ENCODE measurements at regions of chr11 and their contacts with region 1.

Region 1: GRCh38 chr11:7513234-7514098 is at the start of gene PPFIBP2:
- DNase-seq: peak; percentile 79
- H3K4me3 Mint-ChIP-seq: peak within 1 kb of the TSS; percentile 88
- H3K27ac Mint-ChIP-seq: peak within 1 kb of the TSS; percentile 78
- H3K4me1 Mint-ChIP-seq: peaks cover 10% of the 10 kb centered on the region
- H3K27me3 Mint-ChIP-seq: peaks cover 31% of the 10 kb centered on the region
- total RNA-seq, gene PPFIBP2: 1.1 and 2.1 TPM in 2 replicates

Region 2: GRCh38 chr11:7571640-7572000 is 58.2 kb after region 1 on chr11:
- intact Hi-C with region 1: no loop called
- DNase-seq: no peak
- H3K4me3 Mint-ChIP-seq: no peak overlapping the region
- H3K27ac Mint-ChIP-seq: no peak overlapping the region
- H3K4me1 Mint-ChIP-seq: peaks cover 4% of the 10 kb centered on the region
- H3K27me3 Mint-ChIP-seq: peaks cover 21% of the 10 kb centered on the region

Region 3: GRCh38 chr11:7582338-7582985 is 69.0 kb after region 1 on chr11:
- intact Hi-C with region 1: no loop called
- DNase-seq: no peak
- H3K4me3 Mint-ChIP-seq: no peak overlapping the region
- H3K27ac Mint-ChIP-seq: no peak overlapping the region
- H3K4me1 Mint-ChIP-seq: peaks cover 14% of the 10 kb centered on the region
- H3K27me3 Mint-ChIP-seq: peaks cover 32% of the 10 kb centered on the region

Region 4: GRCh38 chr11:7665473-7666291 is 152.2 kb after region 1 on chr11:
- intact Hi-C with region 1: loop called (anchors 1 kb)
- DNase-seq: peak; percentile 50
- H3K4me3 Mint-ChIP-seq: no peak overlapping the region
- H3K27ac Mint-ChIP-seq: peak overlapping the region; percentile 42
- H3K4me1 Mint-ChIP-seq: peaks cover under 1% of the 10 kb centered on the region
- H3K27me3 Mint-ChIP-seq: no peaks in the 10 kb centered on the region

Region 5: DNA sequence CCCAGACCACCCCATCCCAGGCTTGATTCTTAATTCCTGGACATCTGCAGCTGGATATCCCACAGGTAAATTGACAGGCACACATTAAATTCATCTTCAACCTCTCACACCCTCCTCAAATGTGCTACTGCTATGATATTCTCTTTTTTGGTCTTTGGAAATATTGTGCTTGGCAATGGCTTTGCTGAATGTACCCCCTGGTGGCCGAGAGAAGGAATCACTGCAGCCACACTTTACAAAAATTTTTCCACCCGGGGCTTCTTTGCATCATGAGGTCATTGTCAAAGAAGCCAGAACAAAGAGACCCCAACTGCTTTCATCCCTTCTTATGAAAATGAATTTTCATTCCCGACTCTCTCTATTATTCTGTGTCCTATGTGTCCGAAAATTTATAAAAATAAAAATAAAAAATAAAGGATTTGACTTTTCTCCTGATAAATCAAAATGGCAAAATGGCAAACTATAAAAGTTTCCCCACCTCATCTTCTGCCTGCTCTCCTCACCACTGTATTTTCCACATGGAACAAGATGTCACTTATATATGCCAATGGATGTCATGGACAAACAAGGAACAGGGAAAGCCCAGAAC is 174.9 kb after region 1 on chr11:
- intact Hi-C with region 1: loop called (anchors 1 kb)
- DNase-seq: no peak
- H3K4me3 Mint-ChIP-seq: no peak overlapping the region
- H3K27ac Mint-ChIP-seq: no peak overlapping the region
- H3K4me1 Mint-ChIP-seq: peaks cover 6% of the 10 kb centered on the region
- H3K27me3 Mint-ChIP-seq: peaks cover 26% of the 10 kb centered on the region

Region 6: GRCh38 chr11:7904914-7905313 is 391.4 kb after region 1 on chr11:
- intact Hi-C with region 1: no loop called
- DNase-seq: no peak
- H3K4me3 Mint-ChIP-seq: no peak overlapping the region
- H3K27ac Mint-ChIP-seq: no peak overlapping the region
- H3K4me1 Mint-ChIP-seq: no peaks in the 10 kb centered on the region
- H3K27me3 Mint-ChIP-seq: peaks cover 9% of the 10 kb centered on the region

Region 7: GRCh38 chr11:7986768-7987559 is 473.5 kb after region 1 on chr11 and contains the start of gene EIF3F:
- intact Hi-C with region 1: loop called (anchors 10 kb)
- DNase-seq: peak; percentile 91
- H3K4me3 Mint-ChIP-seq: peak within 1 kb of the TSS; percentile 98
- H3K27ac Mint-ChIP-seq: peak within 1 kb of the TSS; percentile 91
- H3K4me1 Mint-ChIP-seq: peaks cover 32% of the 10 kb centered on the region
- H3K27me3 Mint-ChIP-seq: no peaks in the 10 kb centered on the region
- total RNA-seq, gene EIF3F: 237 and 239 TPM in 2 replicates